ENCODE measurements at regions of chr2 and their contacts with region 1.

Region 1: DNA sequence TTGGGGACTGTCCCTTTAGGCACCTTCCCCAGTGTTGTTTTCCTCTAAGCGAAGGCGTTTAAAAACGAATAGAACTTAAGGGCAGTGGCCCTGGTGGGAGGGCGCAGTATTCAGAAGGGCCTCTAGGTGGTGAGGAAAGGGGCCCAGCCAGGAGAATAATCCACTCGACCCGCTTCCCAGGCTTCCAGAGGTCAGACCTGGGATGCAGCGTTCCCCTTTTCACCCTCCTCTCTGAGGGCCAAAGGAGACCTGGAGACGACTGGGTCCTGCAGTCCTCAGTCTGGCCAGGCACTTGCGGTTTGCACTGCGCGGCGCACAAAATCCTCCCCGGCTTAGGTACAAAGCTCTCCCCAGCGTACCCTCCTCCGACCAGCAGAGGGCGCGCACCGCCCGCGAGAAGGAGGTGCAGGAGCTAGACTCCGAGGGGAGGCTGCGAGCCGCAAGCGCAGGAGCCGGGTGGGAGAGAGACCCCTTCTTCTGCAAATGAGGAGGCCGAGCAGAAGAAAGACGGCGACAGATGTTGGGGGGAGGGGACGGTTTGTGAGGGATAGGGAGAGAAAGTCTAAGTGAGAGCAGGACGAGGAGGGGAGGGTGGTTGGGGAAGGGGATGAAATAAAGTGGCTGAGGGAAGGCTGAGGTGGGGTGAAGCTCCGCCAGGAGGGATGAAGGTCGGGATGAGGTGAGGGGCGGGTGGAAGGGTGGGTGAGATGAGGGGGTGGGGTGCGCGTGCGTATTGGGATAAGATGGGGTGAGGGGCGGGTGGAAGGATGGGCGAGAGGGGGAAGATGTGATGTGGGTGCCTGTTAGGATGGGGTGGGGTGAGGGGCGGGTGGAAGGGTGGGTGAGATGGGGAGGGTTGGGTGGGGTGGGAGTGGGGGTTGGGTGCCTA is 4.9 kb downstream of the FEV start:
- DNase-seq: no peak
- H3K4me3 ChIP-seq: no peak overlapping the region
- H3K27me3 ChIP-seq: peaks cover 53% of the 10 kb centered on the region
- CTCF ChIP-seq: peak; percentile 97

Region 2: GRCh38 chr2:218962859-218963492 is 17.1 kb before region 1 on chr2:
- CTCF ChIA-PET with region 1: interaction called, 44 read pairs
- POLR2A ChIA-PET with region 1: no interaction called
- DNase-seq: no peak
- H3K4me3 ChIP-seq: peak overlapping the region; percentile 8; the same call in 1 of the 2 replicates
- H3K27me3 ChIP-seq: peaks cover 29% of the 10 kb centered on the region
- CTCF ChIP-seq: no peak

Region 3: DNA sequence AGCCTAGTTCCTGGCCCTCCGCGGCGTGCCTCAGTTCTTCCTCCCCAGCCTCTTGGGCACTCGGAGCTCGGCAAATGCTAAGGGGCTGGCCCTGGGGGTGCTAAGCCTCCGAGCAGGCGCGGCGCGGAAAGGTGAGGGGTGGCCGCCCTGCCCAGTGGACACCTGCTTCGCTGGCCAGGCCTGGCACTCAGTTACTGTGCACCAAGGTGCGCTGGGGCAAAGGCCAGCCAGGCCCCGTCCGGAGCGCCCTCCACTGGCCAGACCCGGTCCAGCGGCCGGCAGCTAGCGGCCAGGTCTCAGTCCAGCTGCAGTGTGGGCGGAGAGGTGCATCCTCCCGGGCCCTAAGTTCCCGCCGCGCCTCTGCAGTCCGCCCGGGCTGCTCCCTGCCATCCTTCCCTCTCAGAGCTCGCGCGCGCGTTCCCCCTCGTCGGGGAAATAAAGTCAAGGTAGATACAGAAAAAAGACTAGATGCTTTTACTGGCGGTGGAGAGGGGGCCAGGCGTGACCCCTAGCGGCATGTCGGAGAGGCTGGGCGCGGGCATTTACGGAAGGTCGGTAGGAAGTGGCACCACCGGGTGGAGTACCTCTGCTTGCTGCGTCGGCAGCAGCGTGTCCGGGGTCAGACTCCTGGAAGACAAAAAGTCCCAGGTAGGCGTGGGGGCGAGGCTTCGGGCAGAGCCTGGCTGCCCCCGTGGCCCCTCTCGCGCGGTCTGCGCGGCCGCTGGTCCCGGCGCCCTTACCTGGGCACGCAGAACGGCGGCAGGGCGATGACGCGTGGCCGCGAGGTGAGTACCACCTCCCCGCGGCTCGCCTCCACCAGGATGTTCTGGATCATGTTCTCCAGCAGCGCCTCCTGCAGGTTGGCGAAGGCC is 22.5 kb after region 1 on chr2:
- CTCF ChIA-PET with region 1: interaction called, 11 read pairs
- POLR2A ChIA-PET with region 1: no interaction called
- DNase-seq: no peak
- H3K4me3 ChIP-seq: no peak overlapping the region
- H3K27me3 ChIP-seq: peaks cover 59% of the 10 kb centered on the region
- CTCF ChIP-seq: peak; percentile 42

Region 4: GRCh38 chr2:219142329-219142728 is 162.2 kb after region 1 on chr2:
- CTCF ChIA-PET with region 1: interaction called, 11 read pairs
- POLR2A ChIA-PET with region 1: no interaction called
- DNase-seq: peak; percentile 76
- H3K4me3 ChIP-seq: no peak overlapping the region
- H3K27me3 ChIP-seq: no peaks in the 10 kb centered on the region
- CTCF ChIP-seq: peak; percentile 59

Region 5: DNA sequence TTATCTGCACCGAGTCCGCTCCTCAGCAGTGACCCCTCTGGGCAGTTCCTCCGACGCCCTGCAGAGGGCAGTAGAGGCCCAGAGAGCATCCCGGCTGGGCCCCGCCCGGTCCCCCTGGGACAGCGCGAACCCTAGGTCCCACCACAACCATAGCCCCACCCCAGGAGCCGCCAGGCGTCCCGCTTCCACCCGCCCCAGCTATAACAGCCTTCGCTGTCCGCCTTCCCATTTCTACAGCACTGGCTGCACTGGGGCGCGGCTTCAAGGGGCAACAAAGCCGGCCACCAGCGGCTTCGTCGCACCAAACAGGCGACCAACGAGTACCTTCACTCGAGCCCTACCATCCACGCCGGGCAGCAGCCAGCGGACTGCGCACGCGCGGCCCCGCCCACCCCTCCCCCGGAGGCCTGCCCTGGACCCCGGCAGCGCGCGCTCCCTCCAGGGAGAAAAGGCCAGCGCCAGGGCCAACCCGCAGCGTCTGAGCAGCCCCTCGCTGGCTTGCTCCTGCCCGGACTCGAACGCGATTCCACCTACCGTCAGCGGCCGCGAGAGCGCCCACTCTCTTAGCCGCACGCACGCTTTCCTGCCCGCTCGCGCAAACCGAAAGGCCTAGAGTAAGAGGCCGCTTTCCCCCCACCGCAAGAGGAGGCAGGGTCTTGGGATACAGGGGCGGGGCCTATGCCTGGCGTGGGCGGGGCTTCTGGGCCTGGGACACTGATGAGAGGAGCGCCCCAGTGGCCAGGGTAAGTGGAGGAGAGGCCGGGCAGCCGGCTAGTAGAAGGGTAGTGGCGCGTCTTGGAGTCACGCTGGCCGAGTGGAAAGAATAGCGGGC is 180.3 kb after region 1 on chr2 and contains the start of gene NHEJ1:
- CTCF ChIA-PET with region 1: interaction called, 22 read pairs
- POLR2A ChIA-PET with region 1: no interaction called
- DNase-seq: peak; percentile 63
- H3K4me3 ChIP-seq: peak within 1 kb of the TSS; percentile 73
- H3K27me3 ChIP-seq: no peaks in the 10 kb centered on the region
- CTCF ChIP-seq: peak; percentile 99
- polyA plus RNA-seq, gene NHEJ1: 23.9 and 24.1 TPM in 2 replicates